Sigmoid colon (tissue), 7 donors: ENCODE measurements at regions of chr6 and their contacts with region 1.

Region 1: GRCh38 chr6:26401987-26402658 is at the start of gene BTN3A1:
- DNase-seq: peak; percentile 78
- H3K4me3 ChIP-seq: peak within 1 kb of the TSS; percentile 48 to 57 (median 54)
- H3K27ac ChIP-seq: peak within 1 kb of the TSS; percentile 81 to 87 (median 84)
- H3K4me1 ChIP-seq: peaks cover 0 to 24% (median 15%) of the 10 kb centered on the region in 4 donors
- H3K27me3 ChIP-seq: no peaks in the 10 kb centered on the region
- CTCF ChIP-seq: no peak
- EP300 ChIP-seq: no peak
- POLR2A ChIP-seq: no peak
- total RNA-seq, gene BTN3A1: 8.9 to 13.0 (median 10.2) TPM

Region 2: GRCh38 chr6:26366504-26366903 is 35.6 kb before region 1 on chr6:
- intact Hi-C with region 1: loop called (anchors 1 kb)
- DNase-seq: no peak
- H3K4me3 ChIP-seq: no peak overlapping the region
- H3K27ac ChIP-seq: no peak overlapping the region
- H3K4me1 ChIP-seq: peaks cover 0 to 23% (median 4%) of the 10 kb centered on the region in 4 donors
- H3K27me3 ChIP-seq: no peaks in the 10 kb centered on the region
- CTCF ChIP-seq: no peak
- EP300 ChIP-seq: no peak
- POLR2A ChIP-seq: no peak